CD8-positive, alpha-beta T cell (primary cell): ENCODE measurements at regions of chr10 and their contacts with region 1.

Region 1: DNA sequence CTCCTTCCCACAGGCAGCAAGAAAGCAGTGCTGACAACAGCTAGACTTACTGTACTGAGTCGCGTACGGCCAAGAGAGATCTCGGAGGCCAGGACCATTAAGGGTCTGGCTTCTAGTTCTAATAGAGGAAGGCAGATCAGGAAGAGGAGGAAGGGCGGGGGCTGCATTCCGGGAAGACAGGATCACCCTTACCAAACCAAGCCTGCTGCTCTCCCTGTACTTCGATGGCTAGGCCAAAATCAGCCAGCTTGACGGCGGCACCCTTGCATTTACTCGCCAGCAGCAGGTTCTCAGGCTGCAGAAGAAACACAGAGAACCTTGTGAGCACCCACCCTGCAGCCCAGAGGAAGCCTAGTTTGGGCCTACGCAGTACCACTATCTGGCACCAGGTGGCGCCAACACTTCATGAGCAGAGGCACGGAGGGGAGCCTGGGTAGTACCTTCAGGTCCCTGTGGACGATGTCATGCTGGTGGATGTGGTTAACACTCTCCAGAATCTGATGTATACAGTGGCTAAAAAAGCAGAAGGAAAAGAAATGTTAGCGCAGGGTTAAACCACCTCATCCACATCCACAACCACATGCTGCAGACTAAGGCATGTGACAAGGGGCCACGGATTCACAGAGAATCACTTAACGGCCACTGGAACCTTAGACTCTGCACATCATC is 25.4 kb downstream of the CAMK2G start:
- DNase-seq: peak; percentile 84 to 97 (median 92)
- ATAC-seq: peak; percentile 99
- H3K4me3 ChIP-seq: no peak overlapping the region
- H3K4me3 Mint-ChIP-seq: no peak overlapping the region
- H3K27ac ChIP-seq: peak overlapping the region; percentile 20 to 23
- H3K27ac Mint-ChIP-seq: peak overlapping the region; percentile 90
- H3K4me1 ChIP-seq: peaks cover 11% of the 10 kb centered on the region
- H3K4me1 Mint-ChIP-seq: peaks cover 13% of the 10 kb centered on the region
- H3K27me3 ChIP-seq: no peaks in the 10 kb centered on the region
- H3K27me3 Mint-ChIP-seq: no peaks in the 10 kb centered on the region
- CTCF ChIP-seq: peak; percentile 96

Region 2: GRCh38 chr10:73810735-73811465 is 38.1 kb before region 1 on chr10:
- CTCF ChIA-PET with region 1: interaction called, 3 read pairs
- POLR2A ChIA-PET with region 1: no interaction called
- intact Hi-C with region 1: loop called in 1 of 2 experiments (anchors 5 kb)
- DNase-seq: peak; percentile 19 to 79 (median 66)
- ATAC-seq: peak; percentile 12
- H3K4me3 ChIP-seq: peak overlapping the region; percentile 56 to 87
- H3K4me3 Mint-ChIP-seq: peak overlapping the region; percentile 89
- H3K27ac ChIP-seq: peak overlapping the region; percentile 71 to 91
- H3K27ac Mint-ChIP-seq: peak overlapping the region; percentile 95
- H3K4me1 ChIP-seq: peaks cover 48% of the 10 kb centered on the region
- H3K4me1 Mint-ChIP-seq: peaks cover 44% of the 10 kb centered on the region
- H3K27me3 ChIP-seq: no peaks in the 10 kb centered on the region
- H3K27me3 Mint-ChIP-seq: no peaks in the 10 kb centered on the region
- CTCF ChIP-seq: no peak

Region 3: GRCh38 chr10:73837072-73837471 is 11.9 kb before region 1 on chr10:
- CTCF ChIA-PET with region 1: interaction called, 37 read pairs
- POLR2A ChIA-PET with region 1: no interaction called
- intact Hi-C with region 1: no loop called
- DNase-seq: no peak
- ATAC-seq: no peak
- H3K4me3 ChIP-seq: no peak overlapping the region
- H3K4me3 Mint-ChIP-seq: no peak overlapping the region
- H3K27ac ChIP-seq: no peak overlapping the region
- H3K27ac Mint-ChIP-seq: no peak overlapping the region
- H3K4me1 ChIP-seq: no peaks in the 10 kb centered on the region
- H3K4me1 Mint-ChIP-seq: peaks cover 2% of the 10 kb centered on the region
- H3K27me3 ChIP-seq: no peaks in the 10 kb centered on the region
- H3K27me3 Mint-ChIP-seq: no peaks in the 10 kb centered on the region
- CTCF ChIP-seq: no peak

Region 4: GRCh38 chr10:73874267-73875138 is 25.5 kb after region 1 on chr10 and contains the start of gene CAMK2G:
- CTCF ChIA-PET with region 1: interaction called, 528 read pairs
- POLR2A ChIA-PET with region 1: interaction called, 27 read pairs
- intact Hi-C with region 1: loop called (anchors 1 kb)
- DNase-seq: peak; percentile 55 to 93 (median 81)
- ATAC-seq: peak; percentile 72
- H3K4me3 ChIP-seq: peak within 1 kb of the TSS; percentile 93 to 95
- H3K4me3 Mint-ChIP-seq: peak within 1 kb of the TSS; percentile 87
- H3K27ac ChIP-seq: peak within 1 kb of the TSS; percentile 57 to 82
- H3K27ac Mint-ChIP-seq: peak within 1 kb of the TSS; percentile 90
- H3K4me1 ChIP-seq: peaks cover 60% of the 10 kb centered on the region
- H3K4me1 Mint-ChIP-seq: peaks cover 75% of the 10 kb centered on the region
- H3K27me3 ChIP-seq: no peaks in the 10 kb centered on the region
- H3K27me3 Mint-ChIP-seq: no peaks in the 10 kb centered on the region
- CTCF ChIP-seq: no peak
- total RNA-seq, gene CAMK2G: 28.4 to 28.9 TPM

Region 5: DNA sequence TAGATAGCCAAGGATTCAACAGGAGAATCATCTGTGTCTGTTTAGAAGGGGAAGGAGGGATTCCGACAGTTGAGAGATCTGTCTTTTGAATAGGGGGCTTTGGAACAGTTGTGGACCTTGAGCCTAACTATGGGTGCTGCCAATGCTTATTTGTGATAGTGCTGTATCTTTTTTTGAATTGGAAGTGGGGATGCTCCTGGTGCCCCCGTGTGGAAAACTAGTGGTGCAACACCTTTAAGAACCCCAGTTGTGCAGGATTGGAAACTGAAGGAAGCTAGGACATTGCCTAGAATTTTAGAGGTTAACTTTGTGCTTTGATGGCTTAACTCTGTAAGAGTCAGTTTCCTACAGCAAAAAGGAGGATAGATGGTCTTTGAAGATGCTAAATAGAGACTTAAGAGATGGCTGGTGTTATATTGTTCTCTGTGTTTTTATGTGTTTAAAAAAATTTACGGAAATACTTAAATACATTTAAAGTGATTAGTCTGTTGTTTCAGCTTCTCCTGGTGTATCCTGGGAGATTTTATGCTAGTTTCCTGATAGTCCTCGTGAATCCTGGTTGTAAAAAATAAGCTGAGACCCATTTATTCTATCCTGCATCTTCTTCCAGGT is 232.3 kb after region 1 on chr10:
- CTCF ChIA-PET with region 1: interaction called, 6 read pairs
- POLR2A ChIA-PET with region 1: no interaction called
- intact Hi-C with region 1: loop called in 1 of 2 experiments (anchors 2 kb)
- DNase-seq: peak; percentile 7 to 67 (median 36)
- ATAC-seq: peak; percentile 62
- H3K4me3 ChIP-seq: no peak overlapping the region
- H3K4me3 Mint-ChIP-seq: no peak overlapping the region
- H3K27ac ChIP-seq: no peak overlapping the region
- H3K27ac Mint-ChIP-seq: no peak overlapping the region
- H3K4me1 ChIP-seq: peaks cover 4% of the 10 kb centered on the region
- H3K4me1 Mint-ChIP-seq: peaks cover 17% of the 10 kb centered on the region
- H3K27me3 ChIP-seq: no peaks in the 10 kb centered on the region
- H3K27me3 Mint-ChIP-seq: no peaks in the 10 kb centered on the region
- CTCF ChIP-seq: peak; percentile 66